Activated CD4-positive, alpha-beta T cell treated with anti-CD3 and anti-CD28 coated beads, Interleukin-2, amount 10 ng/mL, durations not matched to agents 24 days and 14 days (primary cell): ENCODE measurements at regions of chr4 and their contacts with region 1.

Region 1: GRCh38 chr4:38310446-38311043 is 350.3 kb downstream of the PTTG2 start:
- DNase-seq: peak; percentile 94
- H3K4me3 Mint-ChIP-seq: peak overlapping the region; percentile 66
- H3K27ac Mint-ChIP-seq: peak overlapping the region; percentile 83
- H3K4me1 Mint-ChIP-seq: peaks cover 49% of the 10 kb centered on the region
- H3K27me3 Mint-ChIP-seq: peaks cover 47% of the 10 kb centered on the region

Region 2: GRCh38 chr4:38062088-38062893 is 248.3 kb before region 1 on chr4:
- intact Hi-C with region 1: loop called (anchors 2 kb)
- DNase-seq: peak; percentile 88
- H3K4me3 Mint-ChIP-seq: peak overlapping the region; percentile 88
- H3K27ac Mint-ChIP-seq: peak overlapping the region; percentile 69
- H3K4me1 Mint-ChIP-seq: peaks cover 12% of the 10 kb centered on the region
- H3K27me3 Mint-ChIP-seq: no peaks in the 10 kb centered on the region

Region 3: GRCh38 chr4:38334810-38335537 is 24.4 kb after region 1 on chr4:
- intact Hi-C with region 1: loop called (anchors 1 kb)
- DNase-seq: no peak
- H3K4me3 Mint-ChIP-seq: peak overlapping the region; percentile 6
- H3K27ac Mint-ChIP-seq: peak overlapping the region; percentile 3
- H3K4me1 Mint-ChIP-seq: peaks cover 17% of the 10 kb centered on the region
- H3K27me3 Mint-ChIP-seq: peaks cover 44% of the 10 kb centered on the region

Region 4: GRCh38 chr4:38560768-38561558 is 250.4 kb after region 1 on chr4:
- intact Hi-C with region 1: loop called (anchors 2 kb)
- DNase-seq: peak; percentile 61
- H3K4me3 Mint-ChIP-seq: no peak overlapping the region
- H3K27ac Mint-ChIP-seq: no peak overlapping the region
- H3K4me1 Mint-ChIP-seq: peaks cover 11% of the 10 kb centered on the region
- H3K27me3 Mint-ChIP-seq: peaks cover 50% of the 10 kb centered on the region

Region 5: GRCh38 chr4:38804654-38805295 is 494.2 kb after region 1 on chr4 and contains the start of gene TLR1:
- intact Hi-C with region 1: loop called (anchors 5 kb)
- DNase-seq: peak; percentile 79
- H3K4me3 Mint-ChIP-seq: peak within 1 kb of the TSS; percentile 81
- H3K27ac Mint-ChIP-seq: peak within 1 kb of the TSS; percentile 86
- H3K4me1 Mint-ChIP-seq: peaks cover 29% of the 10 kb centered on the region
- H3K27me3 Mint-ChIP-seq: no peaks in the 10 kb centered on the region
- total RNA-seq, gene TLR1: 0.85 and 2.6 TPM in 2 replicates